ENCODE measurements at regions of chr6 and their contacts with region 1.

Region 1: DNA sequence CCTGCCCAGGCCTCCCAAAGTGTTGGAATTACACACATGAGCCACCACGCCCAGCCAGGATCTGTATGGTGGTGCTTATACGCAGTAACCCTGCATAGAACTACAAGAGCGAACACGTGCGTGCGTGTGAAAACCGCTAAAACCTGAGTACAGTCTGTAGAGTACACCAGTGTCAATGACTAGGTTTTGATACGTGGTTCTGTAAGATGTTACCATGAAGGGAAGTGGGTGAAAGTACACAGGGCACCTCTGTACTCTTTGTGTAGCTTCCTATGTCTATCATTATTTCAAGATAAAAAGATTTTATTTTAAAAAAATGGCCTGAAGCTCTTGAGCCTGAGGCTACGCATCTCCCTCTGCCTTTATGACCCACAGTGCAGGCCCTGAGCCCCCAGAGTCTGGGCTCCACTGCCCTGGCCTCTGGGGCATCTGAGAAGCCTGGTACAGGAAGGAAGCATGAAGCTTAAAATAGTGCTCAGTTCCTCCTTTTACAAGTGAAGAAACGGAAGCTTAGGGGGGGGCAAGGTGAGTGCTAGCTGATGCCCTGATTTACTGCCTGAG is 21.6 kb downstream of the LY86 start:
- DNase-seq: peak; percentile 65
- ATAC-seq: peak; percentile 80
- H3K4me3 Mint-ChIP-seq: peak overlapping the region; percentile 74
- H3K27ac Mint-ChIP-seq: peak overlapping the region; percentile 96
- H3K4me1 Mint-ChIP-seq: peaks cover 52% of the 10 kb centered on the region
- H3K27me3 Mint-ChIP-seq: no peaks in the 10 kb centered on the region

Region 2: DNA sequence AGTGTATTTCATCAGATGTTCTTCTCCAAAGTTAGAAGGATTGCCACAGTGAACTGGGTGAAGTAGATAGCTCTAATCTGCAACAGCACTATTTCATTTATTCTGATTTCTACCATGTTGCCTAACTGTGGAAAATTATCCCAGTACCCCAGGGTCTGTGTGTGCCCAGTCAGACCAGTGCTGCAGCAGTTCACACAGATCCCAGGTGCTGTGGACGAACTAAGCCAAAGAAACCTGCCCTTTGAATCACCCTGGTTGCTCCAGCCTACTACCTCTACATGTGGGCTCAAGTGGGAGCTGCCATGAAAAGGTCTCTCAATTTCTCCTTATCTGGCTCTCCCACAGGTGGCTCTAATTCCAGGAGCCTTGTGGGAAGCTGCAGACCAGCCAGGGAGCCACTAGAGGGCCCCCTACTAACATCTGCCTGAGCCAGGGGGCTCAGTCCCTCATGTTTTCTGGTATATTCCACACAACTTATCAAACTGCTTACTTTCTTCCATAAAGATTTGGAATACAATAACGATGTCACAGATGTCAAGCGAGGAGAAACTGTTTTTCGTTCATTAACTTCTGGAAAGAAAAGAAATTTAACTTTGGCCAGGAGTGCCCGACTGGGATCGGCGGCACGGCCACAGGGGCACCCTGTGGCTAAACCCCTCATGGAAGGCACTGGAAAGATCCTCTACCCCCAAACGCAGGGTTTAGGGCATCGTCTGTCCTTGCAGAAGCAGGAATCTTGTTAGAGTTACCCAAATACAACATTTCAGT is 53.2 kb before region 1 on chr6:
- POLR2A ChIA-PET with region 1: no interaction called
- DNase-seq: no peak
- ATAC-seq: peak; percentile 69
- H3K4me3 Mint-ChIP-seq: no peak overlapping the region
- H3K27ac Mint-ChIP-seq: peak overlapping the region; percentile 26
- H3K4me1 Mint-ChIP-seq: peaks cover 42% of the 10 kb centered on the region
- H3K27me3 Mint-ChIP-seq: peaks cover 5% of the 10 kb centered on the region

Region 3: GRCh38 chr6:6588064-6588923 is 21.8 kb before region 1 on chr6 and contains the start of gene LY86:
- POLR2A ChIA-PET with region 1: interaction called, 99 read pairs
- DNase-seq: peak; percentile 64
- ATAC-seq: peak; percentile 62
- H3K4me3 Mint-ChIP-seq: peak within 1 kb of the TSS; percentile 88
- H3K27ac Mint-ChIP-seq: peak within 1 kb of the TSS; percentile 99
- H3K4me1 Mint-ChIP-seq: peaks cover 77% of the 10 kb centered on the region
- H3K27me3 Mint-ChIP-seq: no peaks in the 10 kb centered on the region
- total RNA-seq, gene LY86: 5.5 to 5.7 TPM

Region 4: DNA sequence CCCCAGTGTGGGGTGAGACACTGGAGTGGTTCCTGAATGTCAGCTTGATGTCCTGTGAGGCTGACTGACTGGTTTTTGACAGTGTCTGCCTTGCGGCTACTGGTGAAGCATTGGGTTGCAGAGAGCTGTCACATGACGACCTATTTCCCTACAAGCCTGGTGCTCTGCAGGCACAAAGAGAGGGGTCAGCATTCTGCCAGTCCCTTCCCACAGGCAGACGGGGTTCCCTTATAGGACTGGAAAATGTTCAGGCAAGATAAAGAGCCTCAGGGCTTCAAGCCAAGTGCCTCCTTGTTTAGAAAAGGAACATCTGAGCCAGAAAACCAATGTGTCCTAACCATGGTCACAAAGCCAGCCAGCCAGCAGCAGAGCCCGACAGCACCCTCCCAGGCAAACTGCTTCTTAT is 10.6 kb before region 1 on chr6:
- POLR2A ChIA-PET with region 1: interaction called, 31 read pairs
- DNase-seq: no peak
- ATAC-seq: no peak
- H3K4me3 Mint-ChIP-seq: no peak overlapping the region
- H3K27ac Mint-ChIP-seq: peak overlapping the region; percentile 42
- H3K4me1 Mint-ChIP-seq: peaks cover 42% of the 10 kb centered on the region
- H3K27me3 Mint-ChIP-seq: no peaks in the 10 kb centered on the region

Region 5: DNA sequence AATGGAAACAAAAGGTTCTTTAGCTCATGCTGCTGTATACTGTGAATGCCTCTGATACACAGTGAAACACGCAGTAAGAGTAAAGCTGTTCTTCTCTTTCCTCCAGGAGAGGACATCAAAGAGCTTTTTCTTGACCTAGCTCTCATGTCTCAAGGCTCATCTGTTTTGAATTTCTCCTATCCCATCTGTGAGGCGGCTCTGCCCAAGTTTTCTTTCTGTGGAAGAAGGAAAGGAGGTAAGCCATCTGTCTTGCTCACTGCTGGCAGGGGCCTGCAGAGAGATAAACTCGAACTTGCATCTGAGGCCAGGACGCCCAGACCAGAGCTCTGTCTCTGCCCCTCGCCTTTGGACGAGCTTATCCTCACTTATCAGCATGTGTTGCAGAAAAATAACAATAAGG is 16.1 kb after region 1 on chr6:
- POLR2A ChIA-PET with region 1: interaction called, 18 read pairs
- DNase-seq: no peak
- ATAC-seq: no peak
- H3K4me3 Mint-ChIP-seq: no peak overlapping the region
- H3K27ac Mint-ChIP-seq: no peak overlapping the region
- H3K4me1 Mint-ChIP-seq: peaks cover 24% of the 10 kb centered on the region
- H3K27me3 Mint-ChIP-seq: no peaks in the 10 kb centered on the region

Region 6: GRCh38 chr6:6635869-6636268 is 25.8 kb after region 1 on chr6:
- POLR2A ChIA-PET with region 1: interaction called, 11 read pairs
- DNase-seq: no peak
- ATAC-seq: no peak
- H3K4me3 Mint-ChIP-seq: no peak overlapping the region
- H3K27ac Mint-ChIP-seq: peak overlapping the region; percentile 75
- H3K4me1 Mint-ChIP-seq: peaks cover 44% of the 10 kb centered on the region
- H3K27me3 Mint-ChIP-seq: no peaks in the 10 kb centered on the region

Region 7: GRCh38 chr6:6661684-6662083 is 51.6 kb after region 1 on chr6:
- POLR2A ChIA-PET with region 1: interaction called, 212 read pairs
- DNase-seq: no peak
- ATAC-seq: no peak
- H3K4me3 Mint-ChIP-seq: no peak overlapping the region
- H3K27ac Mint-ChIP-seq: peak overlapping the region; percentile 98
- H3K4me1 Mint-ChIP-seq: peaks cover 55% of the 10 kb centered on the region
- H3K27me3 Mint-ChIP-seq: no peaks in the 10 kb centered on the region

Measured in activated naive CD8-positive, alpha-beta T cell treated with anti-CD3 and anti-CD28 coated beads, Interleukin-2, amount 10 ng/mL, durations not matched to agents 7 days and 5 days (primary cell).